K562 (cell line): ENCODE measurements at regions of chr18 and their contacts with region 1.

Region 1: DNA sequence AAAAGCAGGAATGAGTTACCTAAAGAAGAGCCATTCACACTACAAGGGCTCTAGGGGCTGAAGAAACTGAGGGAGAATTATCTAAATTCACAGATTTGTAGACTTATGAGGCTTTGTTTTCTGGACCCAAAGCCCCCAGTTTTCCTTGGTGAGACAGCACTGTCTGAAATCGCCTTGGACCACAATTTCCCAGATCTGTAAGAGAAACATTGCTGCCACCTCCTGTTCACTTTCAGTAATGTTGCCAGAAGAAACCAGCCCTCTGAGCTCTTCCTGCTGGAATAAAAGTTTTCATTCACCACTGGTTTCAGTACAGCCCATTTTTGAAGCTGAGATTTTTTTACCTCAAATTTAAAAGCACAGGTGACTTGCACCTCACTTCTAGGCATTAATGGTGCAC is 169.2 kb downstream of the CDH20 start:
- DNase-seq: peak; percentile 15 to 32 (median 28)
- ATAC-seq: peak; percentile 57; the same call in 1 of the 3 replicates
- H3K4me3 ChIP-seq: no peak overlapping the region
- H3K27ac ChIP-seq: no peak overlapping the region
- H3K4me1 ChIP-seq: no peaks in the 10 kb centered on the region
- H3K27me3 ChIP-seq: no peaks in the 10 kb centered on the region
- CTCF ChIP-seq: peak; percentile 30 to 58 (median 40)
- EP300 ChIP-seq: no peak
- POLR2A ChIP-seq: no peak
- RAD21 ChIP-seq: peak; percentile 20 to 60; a peak in 3 of 4 replicates

Region 2: DNA sequence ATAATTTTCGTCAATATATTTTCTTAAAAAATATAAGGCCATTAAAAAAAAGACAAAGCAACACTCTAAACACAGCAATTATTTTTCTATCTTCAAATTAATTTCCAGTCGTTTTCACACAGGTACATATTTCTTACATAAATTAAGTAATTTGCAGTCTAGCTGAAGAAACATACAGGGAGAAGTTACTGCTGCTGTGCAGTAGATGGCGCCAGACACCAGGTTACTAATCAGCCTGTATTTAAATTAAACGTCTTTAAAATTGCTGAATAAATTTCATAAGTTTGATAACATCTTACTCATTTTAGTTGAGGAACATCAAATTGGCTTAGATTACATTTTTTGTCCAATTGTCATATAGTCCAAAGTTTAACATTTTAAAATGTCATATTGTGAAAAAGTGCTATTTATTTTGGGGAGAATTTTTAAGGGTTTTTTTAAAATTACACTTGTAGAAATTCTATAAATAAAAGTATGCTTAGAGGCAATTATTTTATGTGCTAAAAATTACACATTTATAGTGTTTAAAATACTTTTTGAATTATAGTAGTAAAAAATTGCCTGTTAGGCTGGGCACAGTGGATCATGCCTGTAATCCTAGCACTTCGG is 1514.3 kb before region 1 on chr18:
- CTCF ChIA-PET with region 1: interaction called, 3 read pairs
- POLR2A ChIA-PET with region 1: no interaction called
- in situ Hi-C with region 1: no loop called
- intact Hi-C with region 1: loop called (anchors 5 kb)
- DNase-seq: peak; percentile 21 to 52 (median 22)
- ATAC-seq: 0 out of 3 replicates have a peak, but pooled peaks have one; percentile 52
- H3K4me3 ChIP-seq: no peak overlapping the region
- H3K27ac ChIP-seq: no peak overlapping the region
- H3K4me1 ChIP-seq: no peaks in the 10 kb centered on the region
- H3K27me3 ChIP-seq: no peaks in the 10 kb centered on the region
- CTCF ChIP-seq: peak; percentile 55 to 84 (median 64); a peak in 5 of 6 replicates
- EP300 ChIP-seq: no peak
- POLR2A ChIP-seq: no peak
- RAD21 ChIP-seq: peak; percentile 85 to 90

Region 3: GRCh38 chr18:60684843-60685513 is 817.5 kb before region 1 on chr18:
- CTCF ChIA-PET with region 1: no interaction called
- POLR2A ChIA-PET with region 1: no interaction called
- in situ Hi-C with region 1: no loop called
- intact Hi-C with region 1: loop called (anchors 10 kb)
- DNase-seq: peak in 1 of 4 experiments; percentile 0
- ATAC-seq: no peak
- H3K4me3 ChIP-seq: no peak overlapping the region
- H3K27ac ChIP-seq: no peak overlapping the region
- H3K4me1 ChIP-seq: no peaks in the 10 kb centered on the region
- H3K27me3 ChIP-seq: no peaks in the 10 kb centered on the region
- CTCF ChIP-seq: peak in 1 of 3 experiments; percentile 25; a peak in 2 of 6 replicates
- EP300 ChIP-seq: no peak
- POLR2A ChIP-seq: no peak
- RAD21 ChIP-seq: peak in 1 of 2 experiments; percentile 46; a peak in 2 of 4 replicates

Region 4: GRCh38 chr18:61085761-61086160 is 416.7 kb before region 1 on chr18:
- CTCF ChIA-PET with region 1: no interaction called
- POLR2A ChIA-PET with region 1: no interaction called
- in situ Hi-C with region 1: no loop called
- intact Hi-C with region 1: loop called (anchors 5 kb)
- DNase-seq: no peak
- ATAC-seq: no peak
- H3K4me3 ChIP-seq: no peak overlapping the region
- H3K27ac ChIP-seq: no peak overlapping the region
- H3K4me1 ChIP-seq: no peaks in the 10 kb centered on the region
- H3K27me3 ChIP-seq: no peaks in the 10 kb centered on the region
- CTCF ChIP-seq: no peak
- EP300 ChIP-seq: no peak
- POLR2A ChIP-seq: no peak
- RAD21 ChIP-seq: no peak

Region 5: DNA sequence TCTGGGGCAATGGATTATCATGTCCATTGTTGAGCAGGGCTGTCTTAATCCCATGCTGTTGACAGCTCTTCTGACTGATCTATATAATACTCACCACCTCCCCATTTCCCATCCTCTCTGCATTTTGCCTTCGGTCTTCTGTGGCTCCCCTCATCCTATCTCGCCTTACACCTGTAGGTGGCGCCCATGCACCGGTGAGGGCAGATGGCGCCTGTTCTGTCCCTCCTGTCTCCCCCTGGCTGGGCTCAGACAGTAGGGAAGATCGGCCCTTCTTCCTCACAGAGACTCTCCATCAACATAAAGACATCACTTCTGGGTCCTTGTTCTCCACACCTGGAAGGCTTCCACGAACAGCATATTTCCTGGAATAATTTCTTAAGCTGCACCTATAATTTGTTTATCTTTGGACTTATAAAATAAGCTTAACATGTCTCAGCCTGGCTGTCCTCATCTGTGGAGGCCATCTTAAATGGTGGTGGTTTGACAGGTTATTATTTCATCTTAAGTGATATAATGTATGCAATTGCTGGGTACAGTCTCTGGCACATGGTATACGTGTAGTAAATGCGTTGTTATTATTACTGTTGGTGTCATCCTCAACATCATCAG is 180.1 kb before region 1 on chr18:
- CTCF ChIA-PET with region 1: no interaction called
- POLR2A ChIA-PET with region 1: no interaction called
- in situ Hi-C with region 1: no loop called
- intact Hi-C with region 1: loop called (anchors 5 kb)
- DNase-seq: peak; percentile 29 to 39 (median 36)
- ATAC-seq: peak; percentile 85
- H3K4me3 ChIP-seq: no peak overlapping the region
- H3K27ac ChIP-seq: no peak overlapping the region
- H3K4me1 ChIP-seq: no peaks in the 10 kb centered on the region
- H3K27me3 ChIP-seq: no peaks in the 10 kb centered on the region
- CTCF ChIP-seq: peak; percentile 49 to 72 (median 52); a peak in 5 of 6 replicates
- EP300 ChIP-seq: no peak
- POLR2A ChIP-seq: no peak
- RAD21 ChIP-seq: peak in 1 of 2 experiments; percentile 54; a peak in 1 of 4 replicates

Region 6: GRCh38 chr18:61435064-61435652 is 67.3 kb before region 1 on chr18:
- CTCF ChIA-PET with region 1: no interaction called
- POLR2A ChIA-PET with region 1: no interaction called
- in situ Hi-C with region 1: no loop called
- intact Hi-C with region 1: no loop called
- DNase-seq: peak; percentile 4 to 25 (median 16)
- ATAC-seq: no peak; the same call in 2 of the 3 replicates
- H3K4me3 ChIP-seq: no peak overlapping the region
- H3K27ac ChIP-seq: no peak overlapping the region
- H3K4me1 ChIP-seq: no peaks in the 10 kb centered on the region
- H3K27me3 ChIP-seq: no peaks in the 10 kb centered on the region
- CTCF ChIP-seq: peak in 2 of 3 experiments; percentile 21 to 29; a peak in 1 of 6 replicates
- EP300 ChIP-seq: no peak
- POLR2A ChIP-seq: no peak
- RAD21 ChIP-seq: no peak

Region 7: DNA sequence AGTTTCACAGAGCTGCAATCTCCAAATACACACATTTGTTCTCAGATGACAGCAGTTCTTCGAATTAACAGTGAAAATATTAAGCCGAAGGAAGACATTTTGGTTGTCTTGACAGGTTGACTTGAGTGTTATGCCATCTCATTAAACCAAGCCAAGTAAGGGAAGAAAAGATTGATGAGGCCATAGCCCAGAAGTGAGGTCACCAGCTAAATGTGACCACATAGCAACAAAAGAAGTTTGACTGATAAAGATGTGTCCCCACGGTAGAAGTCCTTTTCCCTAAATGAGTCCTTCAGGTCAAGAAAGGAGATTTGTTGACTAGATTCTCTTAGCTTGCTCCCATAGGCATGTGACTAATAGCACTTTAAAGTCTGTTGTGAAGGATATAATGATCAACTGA is 13.1 kb before region 1 on chr18:
- CTCF ChIA-PET with region 1: no interaction called
- POLR2A ChIA-PET with region 1: no interaction called
- in situ Hi-C with region 1: no loop called
- intact Hi-C with region 1: no loop called
- DNase-seq: no peak
- ATAC-seq: no peak
- H3K4me3 ChIP-seq: no peak overlapping the region
- H3K27ac ChIP-seq: no peak overlapping the region
- H3K4me1 ChIP-seq: no peaks in the 10 kb centered on the region
- H3K27me3 ChIP-seq: no peaks in the 10 kb centered on the region
- CTCF ChIP-seq: no peak
- EP300 ChIP-seq: no peak
- POLR2A ChIP-seq: no peak
- RAD21 ChIP-seq: no peak

Region 8: DNA sequence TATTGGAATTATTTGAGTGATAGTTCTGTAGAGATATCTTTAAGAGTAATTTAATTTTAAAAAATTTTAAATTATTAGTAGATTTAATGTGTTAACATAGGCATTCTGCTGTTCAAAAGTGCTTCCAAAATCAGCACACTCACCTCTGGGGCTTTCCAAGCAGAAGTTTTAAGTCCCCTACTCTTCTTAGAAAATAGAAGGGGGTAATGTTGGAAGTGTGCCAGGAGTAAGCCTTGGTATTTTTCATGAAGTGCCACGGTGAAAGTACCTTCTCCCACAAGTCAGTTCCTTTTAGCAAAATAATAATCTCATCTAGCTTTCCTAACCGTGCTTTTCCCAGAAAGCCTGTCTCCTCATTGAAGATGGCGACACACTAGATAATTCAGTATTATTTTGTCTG is 818.7 kb after region 1 on chr18:
- CTCF ChIA-PET with region 1: no interaction called
- POLR2A ChIA-PET with region 1: no interaction called
- in situ Hi-C with region 1: no loop called
- intact Hi-C with region 1: no loop called
- DNase-seq: no peak
- ATAC-seq: no peak
- H3K4me3 ChIP-seq: no peak overlapping the region
- H3K27ac ChIP-seq: no peak overlapping the region
- H3K4me1 ChIP-seq: peaks cover 4 to 20% of the 10 kb centered on the region in 2 experiments; a peak in 3 of 5 replicates
- H3K27me3 ChIP-seq: peaks cover 5 to 15% of the 10 kb centered on the region in 2 experiments; a peak in 4 of 5 replicates
- CTCF ChIP-seq: no peak
- EP300 ChIP-seq: no peak
- POLR2A ChIP-seq: no peak
- RAD21 ChIP-seq: no peak